Upper lobe of right lung (tissue), 1 donor: ENCODE measurements at regions of chr6 and their contacts with region 1.

Region 1: DNA sequence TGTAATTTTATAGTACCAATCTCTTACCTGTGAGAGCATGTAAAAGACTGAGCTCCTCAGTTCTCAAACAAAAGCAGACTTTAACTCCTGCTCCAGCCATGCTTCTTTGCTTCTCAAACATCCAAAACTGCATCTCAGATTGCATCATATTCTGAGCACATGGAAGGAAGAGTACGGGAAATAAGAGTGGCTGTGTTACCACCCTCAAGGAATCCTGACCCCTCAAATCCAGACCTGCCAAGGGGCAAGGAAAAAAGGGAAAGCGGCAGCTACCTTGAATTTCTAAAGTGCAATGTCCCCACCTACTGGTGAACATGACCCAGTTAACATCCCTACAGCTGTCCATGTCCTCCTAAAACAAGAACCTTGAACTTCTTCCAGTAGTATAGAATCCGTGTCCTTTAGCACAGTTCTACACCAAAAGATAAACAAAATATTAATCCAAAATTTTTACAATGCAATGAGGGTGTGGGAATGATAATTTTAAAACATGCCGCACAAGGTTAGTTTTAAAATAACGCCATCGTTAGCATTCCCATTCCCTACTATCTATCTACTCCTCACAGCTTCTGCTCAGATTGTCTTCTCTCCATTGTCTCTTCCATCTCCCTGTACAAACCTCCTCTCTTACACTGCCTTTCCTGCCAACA is 34.1 kb upstream of the HLA-DQB1 start:
- DNase-seq: no peak
- ATAC-seq: peak; percentile 94
- H3K4me3 ChIP-seq: no peak overlapping the region
- H3K27ac ChIP-seq: no peak overlapping the region
- H3K4me1 ChIP-seq: no peaks in the 10 kb centered on the region
- H3K27me3 ChIP-seq: no peaks in the 10 kb centered on the region
- CTCF ChIP-seq: peak; percentile 64

Region 2: DNA sequence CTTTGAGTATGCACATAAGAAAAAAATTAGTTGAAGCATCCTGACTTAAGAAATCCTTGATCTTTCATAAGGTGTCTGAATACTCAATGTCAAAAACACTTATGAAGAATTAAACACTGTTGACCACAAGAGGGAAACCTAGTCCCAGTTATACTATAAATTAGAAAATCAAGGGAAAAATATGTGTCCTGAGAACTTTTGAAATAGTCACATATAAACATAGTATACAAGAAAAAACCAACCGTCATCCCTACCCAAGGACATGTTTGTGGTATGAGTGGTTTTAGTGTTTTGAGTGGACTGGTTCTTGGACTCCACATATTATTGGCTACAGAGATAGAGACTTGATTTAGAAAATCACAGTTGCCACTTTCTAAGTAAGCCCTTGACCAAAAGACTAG is 268.5 kb before region 1 on chr6:
- intact Hi-C with region 1: loop called (anchors 5 kb)
- DNase-seq: no peak
- ATAC-seq: peak; percentile 55
- H3K4me3 ChIP-seq: no peak overlapping the region
- H3K27ac ChIP-seq: no peak overlapping the region
- H3K4me1 ChIP-seq: no peaks in the 10 kb centered on the region
- H3K27me3 ChIP-seq: no peaks in the 10 kb centered on the region
- CTCF ChIP-seq: peak; percentile 55

Region 3: GRCh38 chr6:32558426-32559057 is 142.0 kb before region 1 on chr6:
- intact Hi-C with region 1: no loop called
- DNase-seq: no peak
- ATAC-seq: peak; percentile 61
- H3K4me3 ChIP-seq: no peak overlapping the region
- H3K27ac ChIP-seq: no peak overlapping the region
- H3K4me1 ChIP-seq: no peaks in the 10 kb centered on the region
- H3K27me3 ChIP-seq: no peaks in the 10 kb centered on the region
- CTCF ChIP-seq: no peak

Region 4: DNA sequence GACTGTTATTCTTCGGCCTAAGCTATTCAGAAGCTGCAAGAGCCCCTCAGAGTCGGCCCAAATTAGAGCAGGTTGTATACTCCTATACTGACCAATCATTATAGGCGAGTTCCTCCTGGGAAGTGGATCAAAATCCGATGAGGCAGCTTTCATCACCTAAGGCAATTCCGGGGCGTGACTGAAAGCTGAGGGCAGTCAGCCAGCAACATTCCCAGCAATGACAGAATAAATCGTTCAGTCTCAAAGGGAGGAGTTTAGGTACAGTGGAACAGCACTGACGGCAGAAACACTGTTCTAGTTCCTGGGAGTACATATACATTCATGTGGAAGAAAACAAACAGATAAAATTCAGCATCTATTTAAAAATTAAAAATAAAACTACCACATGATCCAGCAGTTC is 52.1 kb after region 1 on chr6:
- intact Hi-C with region 1: no loop called
- DNase-seq: no peak
- ATAC-seq: peak; percentile 64
- H3K4me3 ChIP-seq: no peak overlapping the region
- H3K27ac ChIP-seq: no peak overlapping the region
- H3K4me1 ChIP-seq: no peaks in the 10 kb centered on the region
- H3K27me3 ChIP-seq: peaks cover 17% of the 10 kb centered on the region
- CTCF ChIP-seq: no peak

Region 5: GRCh38 chr6:32940656-32941213 is 240.2 kb after region 1 on chr6 and contains the start of gene HLA-DMB:
- intact Hi-C with region 1: no loop called
- DNase-seq: peak; percentile 66
- ATAC-seq: peak; percentile 91
- H3K4me3 ChIP-seq: peak within 1 kb of the TSS; percentile 59
- H3K27ac ChIP-seq: peak within 1 kb of the TSS; percentile 89
- H3K4me1 ChIP-seq: peaks cover 39% of the 10 kb centered on the region
- H3K27me3 ChIP-seq: no peaks in the 10 kb centered on the region
- CTCF ChIP-seq: no peak
- total RNA-seq, gene HLA-DMB: 140 TPM